Esophagus muscularis mucosa (tissue), 4 donors: ENCODE measurements at regions of chr3 and their contacts with region 1.

Region 1: GRCh38 chr3:185558395-185558794 is 6.0 kb upstream of the LIPH start:
- DNase-seq: no peak
- H3K4me3 ChIP-seq: no peak overlapping the region
- H3K27ac ChIP-seq: no peak overlapping the region
- H3K4me1 ChIP-seq: peaks cover 0 to 7% (median 2%) of the 10 kb centered on the region in 4 donors
- H3K27me3 ChIP-seq: peaks cover 0 to 23% (median 0%) of the 10 kb centered on the region in 4 donors
- CTCF ChIP-seq: no peak
- EP300 ChIP-seq: no peak
- POLR2A ChIP-seq: no peak

Region 2: GRCh38 chr3:185504642-185505041 is 53.8 kb before region 1 on chr3:
- intact Hi-C with region 1: loop called (anchors 5 kb)
- DNase-seq: no peak
- H3K4me3 ChIP-seq: no peak overlapping the region
- H3K27ac ChIP-seq: no peak overlapping the region
- H3K4me1 ChIP-seq: peaks cover 0 to 6% (median under 1%) of the 10 kb centered on the region in 4 donors
- H3K27me3 ChIP-seq: peaks cover 0 to 5% (median 0%) of the 10 kb centered on the region in 4 donors
- CTCF ChIP-seq: no peak
- EP300 ChIP-seq: no peak
- POLR2A ChIP-seq: no peak

Region 3: GRCh38 chr3:185687271-185687878 is 129.0 kb after region 1 on chr3:
- intact Hi-C with region 1: no loop called
- DNase-seq: peak; percentile 17
- H3K4me3 ChIP-seq: no peak overlapping the region
- H3K27ac ChIP-seq: no peak overlapping the region
- H3K4me1 ChIP-seq: no peaks in the 10 kb centered on the region
- H3K27me3 ChIP-seq: peaks cover 0 to 9% (median 0%) of the 10 kb centered on the region in 4 donors
- CTCF ChIP-seq: no peak
- EP300 ChIP-seq: no peak
- POLR2A ChIP-seq: no peak